Colonic mucosa (tissue), 4 donors: ENCODE measurements at regions of chr3 and their contacts with region 1.

Region 1: DNA sequence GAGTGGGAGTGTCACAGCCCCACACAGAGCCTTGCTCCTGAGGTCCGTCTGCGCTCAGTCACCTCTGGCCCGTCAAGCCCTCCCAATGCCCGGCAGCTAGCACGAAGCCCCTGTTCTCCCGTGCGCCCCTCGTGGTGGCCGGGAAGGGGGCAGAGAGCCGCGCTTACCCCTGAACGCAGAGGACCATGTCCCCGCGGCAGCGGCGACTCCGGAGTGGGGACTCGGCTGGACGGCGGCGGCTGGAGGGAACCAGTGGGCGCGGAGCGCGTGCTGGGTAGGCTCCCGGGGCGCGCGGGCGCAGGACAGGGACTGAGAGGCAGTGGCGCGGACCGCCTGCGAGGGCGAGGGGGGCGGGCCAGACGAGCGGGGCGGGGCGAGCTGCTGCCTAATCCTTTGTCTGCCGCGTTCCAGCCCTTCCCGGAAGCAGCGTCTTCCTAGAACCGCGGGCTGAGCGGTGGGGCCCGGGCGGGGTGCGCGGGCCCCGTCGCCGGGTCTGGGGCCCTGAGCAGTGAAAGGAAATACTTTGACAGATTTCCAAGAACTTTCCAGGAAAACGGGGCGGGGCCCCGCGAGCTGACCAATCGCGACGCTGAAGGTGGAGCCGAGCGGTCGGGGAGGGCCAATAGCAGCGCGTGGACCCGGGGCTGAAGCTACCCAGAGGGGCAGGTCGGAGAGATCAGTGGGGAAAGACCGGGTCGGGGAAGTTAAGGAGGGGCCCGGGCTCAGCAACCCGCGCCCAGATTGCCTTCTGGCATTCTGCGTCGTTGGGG is at the start of gene CISH:
- DNase-seq: peak; percentile 98
- H3K4me3 ChIP-seq: peak within 1 kb of the TSS; percentile 88
- H3K27ac ChIP-seq: peak within 1 kb of the TSS; percentile 95
- H3K4me1 ChIP-seq: peaks cover 18% of the 10 kb centered on the region
- H3K27me3 ChIP-seq: no peaks in the 10 kb centered on the region
- CTCF ChIP-seq: no peak
- total RNA-seq, gene CISH: 17.1 to 19.6 TPM

Region 2: GRCh38 chr3:50519471-50520089 is 92.1 kb before region 1 on chr3:
- intact Hi-C with region 1: loop called (anchors 2 kb)
- DNase-seq: peak; percentile 75
- H3K4me3 ChIP-seq: no peak overlapping the region
- H3K27ac ChIP-seq: no peak overlapping the region
- H3K4me1 ChIP-seq: peaks cover 4% of the 10 kb centered on the region
- H3K27me3 ChIP-seq: no peaks in the 10 kb centered on the region
- CTCF ChIP-seq: peak; percentile 93

Region 3: GRCh38 chr3:50572158-50572557 is 39.5 kb before region 1 on chr3:
- intact Hi-C with region 1: loop called (anchors 2 kb)
- DNase-seq: peak; percentile 83
- H3K4me3 ChIP-seq: no peak overlapping the region
- H3K27ac ChIP-seq: peak overlapping the region; percentile 37
- H3K4me1 ChIP-seq: no peaks in the 10 kb centered on the region
- H3K27me3 ChIP-seq: no peaks in the 10 kb centered on the region
- CTCF ChIP-seq: peak; percentile 87

Region 4: GRCh38 chr3:51311055-51311454 is 699.4 kb after region 1 on chr3:
- intact Hi-C with region 1: loop called (anchors 5 kb)
- DNase-seq: no peak
- H3K4me3 ChIP-seq: no peak overlapping the region
- H3K27ac ChIP-seq: no peak overlapping the region
- H3K4me1 ChIP-seq: no peaks in the 10 kb centered on the region
- H3K27me3 ChIP-seq: no peaks in the 10 kb centered on the region
- CTCF ChIP-seq: no peak

Region 5: GRCh38 chr3:51371943-51372557 is 760.4 kb after region 1 on chr3:
- intact Hi-C with region 1: loop called (anchors 5 kb)
- DNase-seq: peak; percentile 67
- H3K4me3 ChIP-seq: no peak overlapping the region
- H3K27ac ChIP-seq: no peak overlapping the region
- H3K4me1 ChIP-seq: no peaks in the 10 kb centered on the region
- H3K27me3 ChIP-seq: no peaks in the 10 kb centered on the region
- CTCF ChIP-seq: peak; percentile 59